HepG2 (cell line): ENCODE measurements at regions of chr4 and their contacts with region 1.

Region 1: DNA sequence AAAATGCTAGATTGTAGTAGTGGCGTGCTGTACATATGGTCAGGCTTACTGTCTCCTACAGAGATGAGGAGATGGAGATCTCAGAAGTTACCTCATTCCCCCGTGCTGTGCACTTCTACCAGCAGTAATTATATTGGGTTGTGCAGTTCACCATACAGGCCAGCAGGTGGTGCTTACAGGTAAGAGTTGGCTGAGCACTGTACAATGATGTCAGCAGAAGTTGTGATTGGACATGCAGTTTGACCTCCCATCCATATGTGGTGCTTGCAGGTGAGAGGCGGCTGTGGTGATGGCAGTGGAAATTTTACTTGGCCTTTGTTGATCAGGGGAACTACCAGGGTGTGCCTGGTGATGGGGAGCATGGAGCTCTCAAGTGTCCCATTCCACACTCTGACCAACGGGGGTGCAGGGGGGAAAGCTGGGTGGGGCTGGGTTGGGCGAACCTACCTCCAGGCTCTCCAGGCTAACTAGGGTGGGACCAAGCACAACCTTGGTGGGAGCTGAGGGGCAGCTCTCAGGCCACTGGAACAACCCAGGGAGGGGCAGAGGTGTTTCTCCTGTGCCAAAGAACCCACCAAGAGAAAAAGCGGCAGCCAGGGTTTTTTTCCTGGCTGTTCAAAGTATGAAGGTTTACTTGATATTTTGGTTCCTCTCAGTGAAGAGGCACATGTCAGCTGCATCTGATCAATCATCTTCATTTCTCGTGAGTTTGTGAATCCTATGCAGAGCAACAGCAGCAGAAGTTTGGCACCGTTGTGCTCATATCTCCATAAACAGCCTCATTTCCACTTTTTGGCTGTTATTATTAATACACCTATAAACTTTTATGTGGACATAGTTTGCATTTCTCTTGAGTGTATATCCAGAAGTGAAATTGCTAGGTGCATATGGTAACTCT is 73.8 kb upstream of the FREM3 start:
- DNase-seq: peak; percentile 58
- ATAC-seq: peak; percentile 100
- H3K4me3 ChIP-seq: no peak overlapping the region
- H3K27ac ChIP-seq: no peak overlapping the region
- H3K4me1 ChIP-seq: no peaks in the 10 kb centered on the region
- H3K27me3 ChIP-seq: no peaks in the 10 kb centered on the region
- CTCF ChIP-seq: peak; percentile 89
- EP300 ChIP-seq: no peak
- POLR2A ChIP-seq: no peak
- RAD21 ChIP-seq: peak; percentile 39; the same call in 1 of the 2 replicates

Region 2: DNA sequence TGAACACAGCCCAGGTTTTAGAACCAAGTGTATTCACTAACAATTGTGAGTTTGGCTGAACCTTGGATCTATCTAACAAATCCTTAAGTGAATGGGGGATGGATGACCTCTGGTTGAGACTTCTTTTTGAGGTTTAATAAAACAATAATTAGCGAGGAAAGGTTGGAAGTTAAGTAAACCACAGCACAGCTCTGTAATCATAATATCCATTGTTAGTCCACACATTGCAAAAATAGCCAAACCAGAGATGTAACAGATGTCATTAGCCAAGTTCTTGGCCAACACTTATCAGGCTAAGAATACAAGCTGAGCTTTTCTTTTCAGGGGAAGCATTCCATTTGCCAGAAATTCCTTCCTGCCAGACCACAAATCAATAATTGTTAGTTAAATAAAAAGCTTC is 132.9 kb before region 1 on chr4:
- CTCF ChIA-PET with region 1: no interaction called
- POLR2A ChIA-PET with region 1: no interaction called
- in situ Hi-C with region 1: no loop called
- intact Hi-C with region 1: no loop called
- DNase-seq: no peak
- ATAC-seq: no peak
- H3K4me3 ChIP-seq: no peak overlapping the region
- H3K27ac ChIP-seq: no peak overlapping the region
- H3K4me1 ChIP-seq: no peaks in the 10 kb centered on the region
- H3K27me3 ChIP-seq: no peaks in the 10 kb centered on the region
- CTCF ChIP-seq: no peak
- EP300 ChIP-seq: no peak
- POLR2A ChIP-seq: no peak
- RAD21 ChIP-seq: no peak

Region 3: DNA sequence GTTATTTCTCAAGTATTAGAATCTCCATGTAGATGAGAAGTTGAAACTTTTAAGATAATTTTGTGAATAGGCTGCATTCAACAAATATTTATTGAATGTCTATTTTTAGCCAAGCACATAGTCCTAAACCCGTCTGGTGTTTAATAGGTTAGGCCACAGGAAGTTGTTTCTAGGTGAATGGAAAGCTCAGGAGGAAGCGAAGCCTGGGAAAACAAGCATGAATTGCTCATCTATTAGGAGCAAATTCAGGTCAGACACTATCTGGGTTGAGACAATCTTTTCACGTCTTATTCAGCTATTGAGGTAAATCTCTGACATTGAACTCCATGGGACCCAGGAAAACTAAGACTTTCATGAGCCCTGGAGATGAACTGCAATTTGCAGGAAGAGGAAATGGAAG is 30.7 kb before region 1 on chr4:
- CTCF ChIA-PET with region 1: no interaction called
- POLR2A ChIA-PET with region 1: no interaction called
- in situ Hi-C with region 1: no loop called
- intact Hi-C with region 1: no loop called
- DNase-seq: no peak
- ATAC-seq: no peak
- H3K4me3 ChIP-seq: no peak overlapping the region
- H3K27ac ChIP-seq: no peak overlapping the region
- H3K4me1 ChIP-seq: no peaks in the 10 kb centered on the region
- H3K27me3 ChIP-seq: no peaks in the 10 kb centered on the region
- CTCF ChIP-seq: no peak
- EP300 ChIP-seq: no peak
- POLR2A ChIP-seq: no peak
- RAD21 ChIP-seq: no peak

Region 4: GRCh38 chr4:143762511-143762910 is 11.7 kb before region 1 on chr4:
- CTCF ChIA-PET with region 1: no interaction called
- POLR2A ChIA-PET with region 1: no interaction called
- in situ Hi-C with region 1: no loop called
- intact Hi-C with region 1: no loop called
- DNase-seq: no peak
- ATAC-seq: no peak
- H3K4me3 ChIP-seq: no peak overlapping the region
- H3K27ac ChIP-seq: no peak overlapping the region
- H3K4me1 ChIP-seq: no peaks in the 10 kb centered on the region
- H3K27me3 ChIP-seq: no peaks in the 10 kb centered on the region
- CTCF ChIP-seq: no peak
- EP300 ChIP-seq: no peak
- POLR2A ChIP-seq: no peak
- RAD21 ChIP-seq: no peak

Region 5: DNA sequence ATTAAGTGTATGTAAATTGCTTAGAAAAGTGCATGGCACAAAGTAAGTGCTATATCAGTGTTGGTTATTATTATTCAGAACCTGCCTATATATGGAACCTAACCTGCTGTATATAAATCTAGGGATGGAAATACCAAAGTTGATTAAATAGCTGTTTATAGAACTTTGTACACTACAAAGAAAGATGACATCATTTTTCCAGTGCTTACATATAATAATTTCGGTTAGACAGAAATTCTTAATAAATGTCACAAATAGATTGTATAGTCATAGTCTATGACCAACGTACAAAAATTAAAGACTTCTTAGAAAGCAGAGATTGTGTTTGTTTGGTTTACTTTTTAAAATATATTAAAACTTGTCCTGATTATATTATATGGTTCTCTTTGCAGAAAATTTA is 240.6 kb after region 1 on chr4:
- CTCF ChIA-PET with region 1: no interaction called
- POLR2A ChIA-PET with region 1: no interaction called
- in situ Hi-C with region 1: no loop called
- intact Hi-C with region 1: loop called (anchors 2 kb)
- DNase-seq: no peak
- ATAC-seq: no peak
- H3K4me3 ChIP-seq: no peak overlapping the region
- H3K27ac ChIP-seq: no peak overlapping the region
- H3K4me1 ChIP-seq: no peaks in the 10 kb centered on the region
- H3K27me3 ChIP-seq: no peaks in the 10 kb centered on the region
- CTCF ChIP-seq: no peak
- EP300 ChIP-seq: no peak
- POLR2A ChIP-seq: no peak
- RAD21 ChIP-seq: no peak